Activated CD4-positive, alpha-beta memory T cell treated with anti-CD3 and anti-CD28 coated beads for 36 hours (primary cell): ENCODE measurements at regions of chr3 and their contacts with region 1.

Region 1: DNA sequence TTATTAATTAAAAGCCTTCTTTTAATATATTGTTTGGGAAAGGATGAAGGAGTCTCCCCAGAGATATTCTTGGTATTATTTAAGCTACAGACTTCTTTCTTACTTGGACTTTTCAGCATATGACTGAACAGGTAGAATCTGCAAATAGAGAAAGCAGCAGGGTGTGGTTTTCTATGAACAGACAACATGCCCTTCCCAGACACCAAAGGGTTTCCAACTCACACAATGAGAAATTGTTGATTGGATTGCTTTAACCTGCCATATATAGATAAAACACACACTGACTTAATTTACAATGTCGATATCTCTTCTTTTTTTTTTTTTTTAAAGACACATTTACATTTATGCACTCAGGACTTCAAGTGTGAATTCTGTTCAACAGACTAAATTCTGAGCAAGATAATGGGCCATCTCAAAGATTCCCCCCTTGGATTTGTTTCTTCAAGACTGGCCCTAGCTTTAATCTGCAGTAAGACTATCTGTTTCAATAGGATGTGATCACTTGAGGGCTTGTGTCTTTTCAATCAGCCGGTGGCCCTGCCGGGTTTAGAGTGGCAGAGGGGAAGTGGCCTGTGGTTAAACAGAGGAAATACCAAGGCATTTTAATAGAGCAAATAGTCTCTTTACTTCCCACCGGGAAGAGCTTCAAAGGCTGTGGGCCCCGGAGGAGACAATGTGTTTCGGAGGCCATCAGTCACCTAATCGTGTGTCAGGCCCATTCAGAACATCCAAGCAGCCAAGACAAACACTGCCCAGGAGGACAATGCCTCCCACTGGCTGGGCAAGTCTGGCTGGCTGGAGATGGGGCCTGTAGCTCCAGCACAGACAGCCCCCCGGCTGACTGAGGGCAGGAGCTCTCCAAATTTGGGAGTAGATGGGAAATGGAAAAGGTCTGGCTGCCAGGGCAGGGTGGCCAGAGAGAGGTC is 6.1 kb downstream of the IL17RD start:
- DNase-seq: no peak
- H3K4me3 Mint-ChIP-seq: no peak overlapping the region
- H3K27ac Mint-ChIP-seq: no peak overlapping the region
- H3K4me1 Mint-ChIP-seq: peaks cover 15% of the 10 kb centered on the region
- H3K27me3 Mint-ChIP-seq: peaks cover 24% of the 10 kb centered on the region

Region 2: DNA sequence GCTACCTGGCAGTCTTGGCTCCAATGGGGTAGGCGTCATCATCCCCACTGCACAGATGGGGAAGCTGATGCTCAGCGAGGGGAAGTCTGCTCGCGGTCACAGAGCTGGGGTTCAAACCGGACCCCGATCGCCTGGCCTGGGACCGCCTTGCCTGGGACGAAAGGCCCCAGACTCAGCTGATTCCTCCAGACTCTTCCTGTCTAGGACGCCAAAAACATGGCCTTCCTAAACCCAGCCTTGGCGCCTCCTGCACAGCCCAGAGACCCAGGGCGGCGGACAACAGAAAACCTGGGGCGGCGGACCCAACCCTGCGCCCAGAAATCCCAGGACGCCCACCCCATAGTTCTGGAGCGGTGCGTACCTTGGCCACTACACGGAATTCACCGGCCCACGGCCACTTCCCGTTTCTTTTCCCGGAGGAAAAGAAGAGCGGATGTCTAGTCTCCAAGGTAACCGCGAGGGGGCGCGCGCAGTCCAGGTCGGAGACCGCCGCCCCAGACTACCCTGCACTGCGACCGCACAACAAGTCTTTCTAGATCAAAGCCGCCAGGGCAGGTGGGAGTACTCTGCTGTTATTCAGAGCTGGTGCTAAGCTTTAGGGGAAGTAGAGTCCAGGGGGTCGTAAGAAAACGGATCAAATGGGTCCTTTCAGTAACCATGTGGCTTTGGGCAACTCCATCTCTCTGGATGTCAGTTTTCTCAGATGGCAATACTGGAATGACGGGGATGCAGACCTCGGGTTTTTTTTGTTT is 11.0 kb after region 1 on chr3:
- CTCF ChIA-PET with region 1: interaction called, 22 read pairs
- POLR2A ChIA-PET with region 1: no interaction called
- intact Hi-C with region 1: no loop called
- DNase-seq: peak; percentile 75
- H3K4me3 Mint-ChIP-seq: peak overlapping the region; percentile 57
- H3K27ac Mint-ChIP-seq: no peak overlapping the region
- H3K4me1 Mint-ChIP-seq: peaks cover 4% of the 10 kb centered on the region
- H3K27me3 Mint-ChIP-seq: peaks cover 47% of the 10 kb centered on the region

Region 3: GRCh38 chr3:57682284-57682683 is 523.2 kb after region 1 on chr3:
- CTCF ChIA-PET with region 1: no interaction called
- POLR2A ChIA-PET with region 1: no interaction called
- intact Hi-C with region 1: no loop called
- DNase-seq: no peak
- H3K4me3 Mint-ChIP-seq: no peak overlapping the region
- H3K27ac Mint-ChIP-seq: no peak overlapping the region
- H3K4me1 Mint-ChIP-seq: peaks cover 60% of the 10 kb centered on the region
- H3K27me3 Mint-ChIP-seq: no peaks in the 10 kb centered on the region